HEK293T (cell line): ENCODE measurements at regions of chr19 and their contacts with region 1.

Region 1: DNA sequence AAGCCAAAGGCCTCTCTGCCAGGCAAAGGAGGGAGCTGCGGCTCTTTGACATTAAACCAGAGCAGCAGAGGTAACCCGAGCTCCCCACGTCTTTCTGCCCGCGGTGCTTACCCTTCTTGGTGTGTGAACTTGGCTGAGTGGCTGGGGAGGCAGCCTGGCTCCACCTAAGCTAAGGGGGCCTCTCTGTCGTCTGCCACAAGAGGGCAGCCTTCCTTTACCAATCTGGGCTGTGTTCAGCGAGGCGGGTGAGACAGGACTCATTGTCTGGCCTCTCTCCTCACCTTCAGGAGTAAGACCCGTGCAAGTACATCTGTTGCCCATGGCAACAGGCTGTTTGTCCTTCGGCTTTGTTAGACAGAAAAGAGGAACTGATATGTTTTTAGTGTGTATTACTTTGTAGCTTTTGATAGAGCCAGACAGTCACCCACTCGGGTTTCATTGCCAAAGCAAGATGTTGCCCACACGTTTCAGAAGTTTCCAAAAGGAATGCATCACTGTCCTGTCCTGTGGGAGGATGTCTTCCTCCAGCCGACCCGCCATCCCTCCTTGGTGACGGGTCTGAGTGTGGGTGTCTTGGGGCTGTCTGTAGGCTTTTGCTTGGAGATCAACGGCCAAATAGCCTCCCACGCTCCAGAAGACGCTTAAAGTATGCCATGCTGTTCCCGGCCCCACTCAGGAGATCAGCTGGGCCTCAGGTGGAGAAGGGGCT is 4.6 kb downstream of the POP4 start:
- DNase-seq: peak; percentile 82

Region 2: GRCh38 chr19:29596885-29597525 is 13.7 kb before region 1 on chr19:
- CTCF ChIA-PET with region 1: no interaction called
- POLR2A ChIA-PET with region 1: interaction called, 19 read pairs
- DNase-seq: peak; percentile 45

Region 3: DNA sequence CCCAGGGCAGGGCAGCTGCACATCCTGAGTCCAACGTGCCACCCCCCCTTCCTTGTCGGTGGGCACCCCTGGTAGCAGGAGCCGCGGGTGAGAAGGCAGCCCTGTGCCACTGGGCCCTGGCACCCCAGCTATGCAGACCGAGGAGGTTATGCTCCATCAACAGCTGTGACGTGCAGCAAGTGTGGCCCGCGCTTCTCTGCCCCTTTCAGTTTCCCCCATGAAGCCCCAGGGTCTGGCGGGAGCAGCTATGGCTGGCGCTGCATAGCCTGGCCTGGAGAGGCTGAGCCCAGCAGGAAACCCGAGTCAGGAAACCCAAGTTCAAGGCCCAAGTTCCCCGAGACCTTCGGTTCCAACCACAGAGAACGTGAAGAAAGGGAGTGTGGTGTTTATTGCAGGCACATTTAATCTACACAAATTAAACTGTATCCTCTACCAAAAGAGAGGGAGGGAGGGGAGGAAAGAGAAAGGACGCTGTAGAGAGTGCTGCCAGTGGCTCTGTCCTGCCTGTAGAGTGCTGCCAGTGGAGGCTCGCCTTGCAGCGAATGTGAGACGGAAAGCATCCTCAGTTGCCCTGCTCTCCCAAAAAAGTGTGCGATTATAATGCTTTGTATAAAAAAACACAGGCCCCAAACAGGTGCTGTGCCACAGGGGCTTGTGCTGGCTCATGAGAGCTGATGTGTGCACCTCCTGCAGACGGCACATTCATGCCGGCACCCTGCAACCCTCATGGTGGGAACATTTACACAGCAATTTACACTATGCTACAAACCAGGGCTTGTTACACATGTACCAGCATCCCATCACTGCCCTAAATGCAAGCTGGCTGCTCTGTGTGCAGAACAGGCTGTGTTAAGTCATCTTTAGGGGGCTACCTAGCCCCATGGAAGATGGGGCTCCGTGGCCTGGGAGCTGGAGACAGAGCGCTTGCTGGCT is 11.7 kb after region 1 on chr19:
- CTCF ChIA-PET with region 1: interaction called, 6 read pairs
- POLR2A ChIA-PET with region 1: interaction called, 16 read pairs
- DNase-seq: no peak

Region 4: DNA sequence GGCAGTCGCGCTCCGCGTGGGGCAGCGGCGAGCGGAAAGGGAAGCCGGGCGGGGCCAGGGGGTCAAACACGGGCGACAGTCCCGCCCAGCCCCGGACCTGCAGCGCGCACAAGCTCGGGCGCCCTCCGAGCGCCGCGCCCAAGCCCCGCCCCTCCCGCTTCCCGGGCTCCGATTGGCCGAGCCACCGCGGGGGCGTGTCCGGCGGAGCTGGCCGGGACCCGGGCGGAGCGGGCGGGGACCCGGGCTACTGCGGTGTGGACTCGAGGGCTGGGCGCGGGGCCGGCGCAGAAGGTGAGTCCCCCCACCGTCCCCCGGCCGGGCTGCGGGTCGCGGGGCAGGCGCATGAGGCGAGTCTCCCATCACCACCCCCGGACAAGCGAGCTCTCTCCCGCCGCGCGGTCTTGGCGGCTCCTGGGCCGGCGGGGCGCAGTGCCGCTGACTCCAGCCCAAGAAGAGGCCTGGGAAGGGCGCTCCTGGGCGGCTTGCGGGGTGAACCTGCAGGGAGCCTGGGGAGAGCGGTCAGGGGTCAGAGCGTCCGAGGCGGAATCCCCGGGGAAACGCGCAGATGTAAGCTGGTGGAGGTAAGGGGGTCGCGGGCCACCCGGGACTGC is 54.6 kb after region 1 on chr19 and contains the start of gene PLEKHF1:
- CTCF ChIA-PET with region 1: no interaction called
- POLR2A ChIA-PET with region 1: interaction called, 17 read pairs
- DNase-seq: peak; percentile 91

Region 5: DNA sequence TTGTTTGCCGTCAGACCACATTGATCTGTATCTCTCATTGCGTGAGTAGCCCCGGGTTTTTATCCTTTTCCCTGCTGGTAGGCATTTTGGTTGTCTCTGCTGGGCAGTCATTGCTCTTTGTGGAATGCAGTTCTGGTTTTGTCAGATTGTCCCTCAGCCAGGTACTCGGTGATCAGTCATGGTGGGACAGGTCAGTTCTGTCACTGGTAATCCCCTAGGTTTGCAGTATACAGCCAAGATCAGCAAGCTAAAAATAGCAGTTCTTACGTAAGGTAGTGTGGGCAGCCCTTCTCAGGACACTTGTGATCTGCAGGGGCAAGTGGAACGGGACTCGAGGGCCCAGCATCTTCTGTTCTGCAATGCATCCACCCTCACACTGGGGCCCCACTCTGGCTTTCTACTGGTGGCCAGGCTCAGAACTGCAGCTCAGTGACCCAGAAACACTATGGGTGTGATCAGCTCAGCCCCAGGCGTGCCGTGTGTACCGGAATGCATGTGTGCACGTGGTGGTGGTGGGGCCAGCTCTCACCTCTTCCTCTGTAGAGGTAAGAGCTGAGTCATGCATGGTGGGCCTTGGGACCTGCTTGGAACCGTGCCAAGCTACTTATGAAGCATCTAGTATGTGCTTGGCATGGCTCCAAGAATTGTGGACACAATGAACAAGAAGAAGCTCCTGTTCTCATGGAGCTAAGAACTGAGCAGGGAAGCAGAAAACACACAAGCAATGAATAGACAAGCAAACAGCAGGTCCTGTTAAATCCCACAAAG is 60.9 kb after region 1 on chr19:
- CTCF ChIA-PET with region 1: interaction called, 3 read pairs
- POLR2A ChIA-PET with region 1: interaction called, 17 read pairs
- DNase-seq: no peak

Region 6: DNA sequence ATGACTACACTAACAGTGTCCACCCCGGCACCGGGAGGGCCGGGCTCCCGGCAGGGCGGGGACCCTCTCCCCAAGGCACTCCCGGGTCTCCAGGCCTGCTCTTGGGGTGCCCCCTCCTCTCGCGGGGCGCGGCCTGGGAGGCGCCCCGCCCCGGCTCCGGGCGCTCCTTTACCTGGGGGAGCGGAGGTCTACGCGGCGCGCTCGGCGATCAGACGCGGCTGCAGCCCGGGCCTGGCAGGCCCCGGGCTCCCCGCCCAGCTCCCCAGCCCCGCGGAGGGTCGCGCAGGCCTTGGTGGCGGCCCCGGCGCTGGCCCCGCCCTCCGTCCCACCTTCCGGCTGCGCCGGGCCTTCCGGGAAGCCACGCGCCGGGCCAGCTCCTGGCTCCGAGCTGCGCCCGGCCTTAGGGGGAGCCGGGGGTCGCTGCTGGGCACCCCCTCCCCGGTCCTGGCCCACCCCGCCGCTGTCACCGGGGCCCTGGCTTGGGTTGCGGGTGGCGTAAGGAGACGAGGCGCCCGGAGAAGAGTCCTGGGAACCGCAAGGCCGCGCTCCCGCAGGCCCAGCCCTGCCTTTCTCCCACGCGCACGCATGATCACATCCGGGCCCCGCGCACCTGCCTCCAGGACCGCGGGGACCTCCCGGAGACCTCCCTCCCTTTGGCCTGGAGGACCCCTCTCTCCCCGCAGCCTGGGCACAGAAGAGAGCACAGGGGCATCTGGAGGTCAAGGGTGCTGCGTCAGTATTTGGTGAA is 104.4 kb after region 1 on chr19 and contains the start of gene C19orf12:
- CTCF ChIA-PET with region 1: interaction called, 22 read pairs
- POLR2A ChIA-PET with region 1: interaction called, 34 read pairs
- DNase-seq: peak; percentile 79